CD4-positive, alpha-beta memory T cell (primary cell): ENCODE measurements at regions of chr16 and their contacts with region 1.

Region 1: GRCh38 chr16:14249291-14250032 is 178.3 kb downstream of the MRTFB start:
- DNase-seq: peak in 4 of 5 donors; percentile 45 to 51 (median 48)
- H3K4me3 ChIP-seq: no peak overlapping the region
- H3K4me3 Mint-ChIP-seq: no peak overlapping the region
- H3K27ac ChIP-seq: no peak overlapping the region
- H3K27ac Mint-ChIP-seq: peak overlapping the region in 1 of 7 donors; percentile 2
- H3K4me1 ChIP-seq: no peaks in the 10 kb centered on the region
- H3K4me1 Mint-ChIP-seq: no peaks in the 10 kb centered on the region
- H3K27me3 ChIP-seq: no peaks in the 10 kb centered on the region
- H3K27me3 Mint-ChIP-seq: no peaks in the 10 kb centered on the region

Region 2: DNA sequence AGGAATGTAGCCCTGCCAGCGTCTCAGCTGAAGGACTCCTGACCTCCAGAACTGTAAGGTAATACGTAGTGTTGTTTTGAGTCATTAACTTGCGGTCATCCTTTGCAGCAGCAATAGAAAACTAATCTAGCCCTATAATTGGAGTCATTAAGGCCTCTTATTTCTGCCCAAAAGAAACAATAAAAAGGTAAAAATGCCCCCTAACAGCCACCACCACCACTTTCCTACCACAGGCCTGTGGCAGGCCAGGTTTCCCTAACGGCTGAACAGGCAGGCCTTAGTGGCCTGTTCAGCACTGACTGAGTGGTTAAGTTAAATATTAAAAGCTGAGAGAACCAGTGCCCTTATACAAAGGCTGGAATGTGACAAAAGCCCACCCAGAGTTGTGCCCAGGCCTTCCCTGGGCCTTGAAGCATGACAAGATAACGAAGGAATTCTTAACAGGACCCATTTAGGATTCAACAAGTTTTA is 616.0 kb before region 1 on chr16:
- CTCF ChIA-PET with region 1: no interaction called
- POLR2A ChIA-PET with region 1: no interaction called
- intact Hi-C with region 1: no loop called
- DNase-seq: no peak
- H3K4me3 ChIP-seq: no peak overlapping the region
- H3K4me3 Mint-ChIP-seq: no peak overlapping the region
- H3K27ac ChIP-seq: no peak overlapping the region
- H3K27ac Mint-ChIP-seq: no peak overlapping the region
- H3K4me1 ChIP-seq: no peaks in the 10 kb centered on the region
- H3K4me1 Mint-ChIP-seq: peaks cover 0 to 1% (median 0%) of the 10 kb centered on the region in 4 donors
- H3K27me3 ChIP-seq: no peaks in the 10 kb centered on the region
- H3K27me3 Mint-ChIP-seq: no peaks in the 10 kb centered on the region

Region 3: DNA sequence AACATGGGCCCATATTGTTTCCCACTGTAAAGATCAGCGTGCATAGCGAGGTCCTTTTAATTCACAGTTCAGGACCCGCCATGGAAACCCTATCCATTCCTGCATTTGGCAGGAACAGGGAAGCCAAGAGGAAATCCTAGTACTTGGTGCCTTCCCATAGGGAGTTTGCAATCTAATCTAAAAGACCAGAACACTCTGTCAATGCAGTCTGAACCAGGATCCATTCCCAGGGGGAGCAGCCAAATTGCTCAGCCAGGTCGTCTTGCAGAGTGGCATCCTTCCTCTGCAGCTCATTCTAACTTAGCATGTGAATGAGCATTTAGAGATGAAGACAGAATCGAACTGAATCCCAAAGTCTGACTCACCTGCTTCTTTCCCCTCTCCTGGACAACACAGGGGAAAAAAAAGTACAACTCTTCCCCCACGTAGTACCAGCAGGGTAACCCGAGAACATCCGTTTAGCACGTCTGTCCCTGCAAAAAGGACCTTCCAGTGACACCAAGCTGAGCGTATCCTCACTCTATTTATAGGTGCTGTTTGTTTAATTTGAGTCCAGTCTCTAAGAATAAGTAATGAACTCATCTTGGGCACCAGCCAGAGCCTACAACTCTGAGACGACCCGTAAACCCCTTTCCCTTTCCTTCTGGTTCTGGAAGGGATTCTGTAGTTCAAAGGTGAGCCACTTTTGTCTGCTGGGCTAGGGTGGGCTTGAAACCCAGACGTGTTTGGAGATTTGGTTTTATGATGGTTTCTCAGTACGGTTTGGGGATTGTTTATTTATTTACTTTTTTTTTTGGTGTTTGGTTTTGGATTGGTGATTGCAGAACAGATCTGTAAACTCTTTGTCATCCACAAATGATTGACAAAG is 255.0 kb before region 1 on chr16:
- CTCF ChIA-PET with region 1: no interaction called
- POLR2A ChIA-PET with region 1: no interaction called
- intact Hi-C with region 1: no loop called
- DNase-seq: no peak
- H3K4me3 ChIP-seq: no peak overlapping the region
- H3K4me3 Mint-ChIP-seq: no peak overlapping the region
- H3K27ac ChIP-seq: no peak overlapping the region
- H3K27ac Mint-ChIP-seq: no peak overlapping the region
- H3K4me1 ChIP-seq: no peaks in the 10 kb centered on the region
- H3K4me1 Mint-ChIP-seq: peaks cover 0 to 5% (median 4%) of the 10 kb centered on the region in 4 donors
- H3K27me3 ChIP-seq: no peaks in the 10 kb centered on the region
- H3K27me3 Mint-ChIP-seq: peaks cover 4% of the 10 kb centered on the region in 2 donors

Region 4: GRCh38 chr16:14275934-14276333 is 26.5 kb after region 1 on chr16:
- CTCF ChIA-PET with region 1: no interaction called
- POLR2A ChIA-PET with region 1: no interaction called
- intact Hi-C with region 1: no loop called
- DNase-seq: no peak
- H3K4me3 ChIP-seq: no peak overlapping the region
- H3K4me3 Mint-ChIP-seq: no peak overlapping the region
- H3K27ac ChIP-seq: no peak overlapping the region
- H3K27ac Mint-ChIP-seq: no peak overlapping the region
- H3K4me1 ChIP-seq: no peaks in the 10 kb centered on the region
- H3K4me1 Mint-ChIP-seq: no peaks in the 10 kb centered on the region
- H3K27me3 ChIP-seq: no peaks in the 10 kb centered on the region
- H3K27me3 Mint-ChIP-seq: no peaks in the 10 kb centered on the region

Region 5: DNA sequence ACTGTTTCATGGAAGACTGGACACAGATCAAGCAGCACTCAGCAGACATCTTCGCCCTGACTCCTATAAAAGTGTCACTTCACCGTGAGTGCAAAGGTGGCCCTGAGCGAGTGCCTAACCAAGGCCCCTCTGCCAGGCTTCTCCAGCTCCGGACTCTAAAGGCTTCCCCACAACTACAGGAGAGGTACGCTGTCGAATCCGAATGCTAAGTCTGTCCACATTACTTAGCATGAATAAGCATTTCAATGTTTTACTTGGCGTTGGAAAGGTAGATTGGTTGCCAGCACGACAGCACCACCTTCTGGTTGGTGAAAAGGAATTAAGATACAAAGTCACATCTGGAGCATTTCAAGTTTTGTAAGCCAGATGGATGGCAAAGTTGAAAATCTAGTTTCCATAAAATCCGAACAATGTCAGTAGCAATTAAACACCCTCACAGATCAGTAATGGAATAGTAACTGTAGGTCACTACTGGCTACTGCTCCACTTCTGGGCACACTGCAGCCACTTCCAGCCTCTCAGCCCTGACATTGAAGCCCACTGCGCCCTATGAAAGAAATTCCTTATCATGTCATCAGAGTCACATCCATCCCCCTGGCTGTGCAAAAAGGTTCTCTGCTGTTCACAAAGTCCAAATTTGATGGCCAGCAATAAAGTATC is 279.7 kb after region 1 on chr16:
- CTCF ChIA-PET with region 1: interaction called, 14 read pairs
- POLR2A ChIA-PET with region 1: no interaction called
- intact Hi-C with region 1: loop called (anchors 1 kb)
- DNase-seq: peak in 4 of 5 donors; percentile 39 to 44 (median 40)
- H3K4me3 ChIP-seq: no peak overlapping the region
- H3K4me3 Mint-ChIP-seq: no peak overlapping the region
- H3K27ac ChIP-seq: no peak overlapping the region
- H3K27ac Mint-ChIP-seq: no peak overlapping the region
- H3K4me1 ChIP-seq: no peaks in the 10 kb centered on the region
- H3K4me1 Mint-ChIP-seq: peaks cover 1 to 7% (median 6%) of the 10 kb centered on the region in 4 donors
- H3K27me3 ChIP-seq: no peaks in the 10 kb centered on the region
- H3K27me3 Mint-ChIP-seq: no peaks in the 10 kb centered on the region

Region 6: DNA sequence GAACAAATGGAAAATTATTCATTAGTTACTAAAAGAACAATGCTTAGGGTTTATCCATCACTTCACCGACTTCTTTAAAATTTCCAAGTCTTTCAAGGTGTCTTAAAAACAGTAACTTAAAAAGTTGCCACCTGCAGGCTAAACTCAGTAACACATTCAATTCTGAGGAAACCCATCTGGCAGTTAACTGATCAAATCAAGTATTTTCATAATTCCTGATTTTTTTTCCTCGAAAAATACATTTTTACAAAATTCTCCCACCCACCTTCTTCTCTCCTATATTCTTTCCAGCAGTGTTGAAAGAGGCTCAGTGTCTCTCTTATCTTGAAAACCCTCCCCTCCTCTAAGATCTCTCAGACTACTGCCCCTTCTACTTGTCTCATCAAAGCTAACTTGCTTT is 350.7 kb after region 1 on chr16:
- CTCF ChIA-PET with region 1: interaction called, 17 read pairs
- POLR2A ChIA-PET with region 1: no interaction called
- intact Hi-C with region 1: no loop called
- DNase-seq: peak in 4 of 5 donors; percentile 3 to 19 (median 9)
- H3K4me3 ChIP-seq: no peak overlapping the region
- H3K4me3 Mint-ChIP-seq: no peak overlapping the region
- H3K27ac ChIP-seq: no peak overlapping the region
- H3K27ac Mint-ChIP-seq: peak overlapping the region in 2 of 7 donors; percentile 58 to 77
- H3K4me1 ChIP-seq: no peaks in the 10 kb centered on the region
- H3K4me1 Mint-ChIP-seq: peaks cover 0 to 7% (median 6%) of the 10 kb centered on the region in 4 donors
- H3K27me3 ChIP-seq: no peaks in the 10 kb centered on the region
- H3K27me3 Mint-ChIP-seq: no peaks in the 10 kb centered on the region